PC-9 (cell line): ENCODE measurements at regions of chrX and their contacts with region 1.

Region 1: GRCh38 chrX:136028251-136028984 is 43.2 kb downstream of the SLC9A6 start:
- DNase-seq: peak in 1 of 2 experiments; percentile 58
- H3K4me3 ChIP-seq: no peak overlapping the region
- H3K27ac ChIP-seq: no peak overlapping the region
- H3K4me1 ChIP-seq: no peaks in the 10 kb centered on the region
- H3K27me3 ChIP-seq: no peaks in the 10 kb centered on the region
- CTCF ChIP-seq: peak; percentile 87

Region 2: GRCh38 chrX:135015523-135016245 is 1012.7 kb before region 1 on chrX:
- CTCF ChIA-PET with region 1: no interaction called
- POLR2A ChIA-PET with region 1: no interaction called
- intact Hi-C with region 1: no loop called
- DNase-seq: peak in 1 of 2 experiments; percentile 15
- H3K4me3 ChIP-seq: no peak overlapping the region
- H3K27ac ChIP-seq: no peak overlapping the region
- H3K4me1 ChIP-seq: peaks cover 14% of the 10 kb centered on the region
- H3K27me3 ChIP-seq: no peaks in the 10 kb centered on the region
- CTCF ChIP-seq: no peak

Region 3: DNA sequence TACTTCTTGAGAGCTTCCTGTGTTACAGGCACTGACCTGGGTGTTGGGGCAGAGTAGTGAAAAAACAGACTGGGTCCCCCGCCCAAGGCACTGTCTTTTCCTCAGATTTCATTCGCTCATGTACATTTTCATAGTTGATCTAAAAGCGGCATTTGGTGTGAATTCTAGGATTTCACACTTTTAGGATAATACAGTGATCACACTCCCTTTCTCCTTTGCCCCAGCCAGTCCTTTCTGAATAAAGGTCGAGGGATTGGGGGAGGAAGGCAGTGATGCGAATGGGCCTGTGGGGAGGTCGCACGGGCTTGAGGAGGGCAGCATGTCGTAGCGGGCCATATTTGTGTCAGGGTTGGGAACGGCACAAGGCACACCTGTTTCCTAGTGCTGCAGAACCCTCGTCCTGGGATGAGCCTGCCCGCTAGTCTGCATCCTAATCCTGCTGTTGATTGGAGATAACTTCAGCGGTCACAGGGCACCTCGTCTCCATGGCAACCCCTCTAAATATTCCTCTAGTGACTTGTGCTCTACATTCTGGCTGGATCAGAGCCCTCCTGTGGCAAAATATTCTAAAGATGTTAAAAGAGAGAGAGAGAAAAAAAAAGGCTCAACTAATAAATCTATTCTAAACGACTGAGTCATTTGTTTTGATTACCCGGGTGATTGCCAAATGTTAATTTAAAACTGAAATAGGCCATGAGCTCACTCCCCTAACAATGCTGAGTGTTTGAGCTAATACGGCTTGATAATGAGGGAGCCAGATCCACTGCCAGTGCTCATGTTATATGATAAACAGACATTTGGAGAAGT is 140.7 kb after region 1 on chrX:
- CTCF ChIA-PET with region 1: interaction called, 10 read pairs
- POLR2A ChIA-PET with region 1: no interaction called
- intact Hi-C with region 1: no loop called
- DNase-seq: peak; percentile 33 to 94
- H3K4me3 ChIP-seq: no peak overlapping the region
- H3K27ac ChIP-seq: no peak overlapping the region
- H3K4me1 ChIP-seq: peaks cover 42% of the 10 kb centered on the region
- H3K27me3 ChIP-seq: no peaks in the 10 kb centered on the region
- CTCF ChIP-seq: no peak

Region 4: GRCh38 chrX:136227948-136228838 is 199.8 kb after region 1 on chrX:
- CTCF ChIA-PET with region 1: no interaction called
- POLR2A ChIA-PET with region 1: interaction called, 11 read pairs
- intact Hi-C with region 1: no loop called
- DNase-seq: no peak
- H3K4me3 ChIP-seq: no peak overlapping the region
- H3K27ac ChIP-seq: no peak overlapping the region
- H3K4me1 ChIP-seq: 0 out of 2 replicates have a peak, but pooled peaks cover 7% of the 10 kb centered on the region
- H3K27me3 ChIP-seq: no peaks in the 10 kb centered on the region
- CTCF ChIP-seq: no peak

Region 5: DNA sequence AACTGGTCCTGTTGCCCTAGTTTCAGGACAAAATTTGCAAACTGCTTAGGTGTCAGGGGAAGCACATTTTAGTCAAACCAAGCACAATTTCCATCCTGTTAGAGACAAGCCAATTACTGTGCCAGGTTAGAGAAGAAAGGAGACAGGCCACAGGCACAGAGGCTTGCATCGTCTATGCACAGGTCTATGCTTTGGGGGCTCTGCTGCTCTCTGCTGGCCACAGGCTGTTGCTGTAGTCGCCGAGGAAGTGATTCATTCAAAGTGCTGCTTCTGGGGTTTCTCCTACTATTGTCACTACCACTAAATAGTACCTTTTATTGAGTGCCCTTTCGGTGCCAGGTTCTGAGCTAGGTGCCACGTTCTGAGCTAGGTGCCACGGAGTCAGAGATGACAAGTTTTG is 549.1 kb after region 1 on chrX:
- CTCF ChIA-PET with region 1: interaction called, 3 read pairs
- POLR2A ChIA-PET with region 1: no interaction called
- intact Hi-C with region 1: loop called (anchors 2 kb)
- DNase-seq: peak in 1 of 2 experiments; percentile 68
- H3K4me3 ChIP-seq: no peak overlapping the region
- H3K27ac ChIP-seq: no peak overlapping the region
- H3K4me1 ChIP-seq: peaks cover 15% of the 10 kb centered on the region
- H3K27me3 ChIP-seq: no peaks in the 10 kb centered on the region
- CTCF ChIP-seq: peak; percentile 74